Cardiac septum (tissue), 1 donor: ENCODE measurements at regions of chr21 and their contacts with region 1.

Region 1: GRCh38 chr21:28336314-28336713 is 656.4 kb downstream of the LTN1 start:
- DNase-seq: no peak

Region 2: DNA sequence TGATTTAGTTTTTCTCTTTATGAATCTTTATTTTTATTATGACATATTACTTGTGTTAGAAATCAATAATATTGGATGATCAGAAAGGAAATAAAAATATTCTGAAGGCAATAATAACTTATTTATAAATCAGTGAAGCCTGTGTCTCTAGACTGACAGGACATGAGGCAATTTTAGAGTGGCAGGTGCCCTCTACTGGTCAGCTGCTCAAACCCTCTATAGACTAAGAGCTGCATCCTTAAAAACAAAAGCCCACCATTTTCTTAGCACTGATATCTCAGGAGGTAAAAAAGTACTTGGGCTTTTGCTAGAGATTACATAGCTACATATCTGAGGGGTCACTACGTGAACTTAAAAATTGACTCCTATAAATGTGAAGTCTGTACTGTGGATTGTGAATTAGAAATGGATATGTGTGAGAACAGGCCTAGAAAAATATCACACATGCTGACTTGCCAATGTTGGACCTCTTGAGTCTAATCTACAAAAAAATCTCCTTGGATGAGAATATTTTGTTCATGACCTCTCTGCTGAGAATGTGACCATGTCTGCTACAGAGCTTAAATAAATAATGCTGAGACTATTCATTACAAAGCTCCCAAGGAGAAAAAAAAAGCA is 771.5 kb before region 1 on chr21:
- intact Hi-C with region 1: loop called (anchors 10 kb)
- DNase-seq: no peak

Region 3: DNA sequence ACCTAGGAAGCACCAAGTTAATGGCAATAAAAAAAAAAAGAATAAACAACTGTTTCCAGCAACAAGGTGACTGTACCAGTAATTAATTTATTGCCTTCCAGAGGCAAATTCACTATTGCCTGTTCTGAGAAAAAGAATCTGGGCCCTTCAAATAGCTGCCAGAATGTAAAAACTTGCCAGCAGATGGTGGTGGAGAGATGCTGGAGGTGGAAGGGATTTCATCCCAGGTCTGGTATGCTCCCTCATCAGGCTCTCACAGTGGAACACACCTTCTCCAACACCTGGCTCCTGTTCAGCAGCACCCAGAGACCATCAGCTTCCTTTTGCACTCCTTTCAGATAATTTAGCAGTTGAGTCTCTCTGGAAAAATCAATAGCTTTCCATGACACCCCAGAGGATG is 576.5 kb before region 1 on chr21:
- intact Hi-C with region 1: loop called (anchors 5 kb)
- DNase-seq: no peak

Region 4: DNA sequence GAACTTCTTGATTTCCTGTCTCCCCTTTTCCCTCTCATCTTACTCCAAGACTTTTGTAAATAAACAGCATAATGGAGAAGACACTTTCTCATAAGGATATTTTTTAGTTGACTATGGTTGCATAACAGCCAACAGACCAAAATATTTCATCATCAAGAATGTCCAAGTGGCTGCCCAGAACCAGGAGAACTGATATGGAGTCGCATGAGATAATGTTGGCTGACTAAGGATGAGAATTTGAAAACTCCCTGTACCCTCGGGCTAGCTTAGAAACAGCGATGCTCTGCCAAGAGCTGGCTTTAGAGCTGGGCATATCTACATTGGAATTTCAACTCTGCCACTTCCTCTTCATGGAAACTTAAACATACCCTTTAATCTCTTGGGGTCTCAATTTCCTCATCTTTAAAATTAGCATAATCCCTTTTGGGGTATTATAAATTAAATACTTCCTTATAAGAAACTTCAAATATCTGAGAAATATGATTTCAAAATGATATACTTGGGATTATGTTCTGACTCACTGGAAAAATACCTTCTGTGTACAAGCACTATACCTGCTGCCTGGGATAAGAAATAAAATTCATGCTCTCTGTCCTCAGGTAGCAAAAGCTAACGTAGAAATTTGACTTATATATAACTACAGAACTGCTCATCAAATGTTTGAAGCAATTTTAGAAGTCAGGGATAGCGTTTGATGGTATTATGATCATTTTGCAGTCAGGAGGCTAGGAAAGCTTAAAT is 120.9 kb before region 1 on chr21:
- intact Hi-C with region 1: loop called (anchors 10 kb)
- DNase-seq: no peak

Region 5: GRCh38 chr21:28235169-28235895 is 101.0 kb before region 1 on chr21:
- intact Hi-C with region 1: no loop called
- DNase-seq: no peak

Region 6: DNA sequence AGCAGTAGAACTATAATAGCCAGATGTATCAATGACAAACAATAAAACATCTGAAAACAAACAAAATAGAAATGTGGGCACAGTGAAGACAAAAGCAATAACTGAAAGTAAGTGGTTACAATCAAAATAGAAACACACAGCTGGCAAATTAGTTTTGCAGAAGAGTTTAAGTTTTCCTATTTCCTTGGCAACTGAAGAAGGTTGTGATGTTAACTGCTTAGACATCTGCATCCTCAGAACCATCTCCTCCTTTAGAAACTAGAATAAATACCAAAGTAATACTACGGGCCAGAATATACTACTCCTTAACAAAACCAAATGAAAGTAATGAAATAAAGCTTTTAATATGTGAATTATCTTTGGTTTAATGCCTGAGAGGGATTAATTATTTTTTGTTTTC is 50.9 kb after region 1 on chr21:
- intact Hi-C with region 1: no loop called
- DNase-seq: no peak

Region 7: GRCh38 chr21:28745131-28746016 is 409.1 kb after region 1 on chr21:
- intact Hi-C with region 1: loop called (anchors 2 kb)
- DNase-seq: peak; percentile 84